ENCODE measurements at regions of chr10 and their contacts with region 1.

Region 1: DNA sequence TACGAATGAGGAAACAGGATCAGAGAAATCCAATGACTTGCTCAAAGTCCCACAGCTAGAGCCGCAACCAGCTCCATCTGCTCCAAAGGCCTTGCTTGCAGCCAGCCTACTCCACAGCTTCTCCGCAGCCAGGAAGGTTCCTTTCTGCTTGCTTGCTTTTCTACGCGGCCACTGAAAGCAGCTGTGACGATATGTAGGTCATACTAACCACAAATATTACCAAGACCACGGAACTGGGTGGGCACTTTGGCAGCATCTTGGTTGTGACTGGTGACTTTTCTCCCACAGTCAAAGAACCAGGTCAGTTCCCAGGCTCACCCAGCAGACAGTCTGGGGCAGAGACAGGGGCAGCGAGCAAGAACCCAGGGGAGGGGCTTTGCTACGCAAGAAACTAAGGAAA is 86.4 kb downstream of the FAM53B start:
- DNase-seq: no peak
- H3K4me3 ChIP-seq: no peak overlapping the region
- H3K27ac ChIP-seq: no peak overlapping the region
- H3K4me1 ChIP-seq: no peaks in the 10 kb centered on the region
- H3K27me3 ChIP-seq: no peaks in the 10 kb centered on the region
- CTCF ChIP-seq: no peak

Region 2: GRCh38 chr10:124892031-124892430 is 234.2 kb after region 1 on chr10:
- CTCF ChIA-PET with region 1: interaction called, 13 read pairs
- POLR2A ChIA-PET with region 1: no interaction called
- intact Hi-C with region 1: no loop called
- DNase-seq: no peak
- H3K4me3 ChIP-seq: no peak overlapping the region
- H3K27ac ChIP-seq: no peak overlapping the region
- H3K4me1 ChIP-seq: peaks cover 13% of the 10 kb centered on the region
- H3K27me3 ChIP-seq: no peaks in the 10 kb centered on the region
- CTCF ChIP-seq: no peak

Measured in PC-9 (cell line).